A673 (cell line): ENCODE measurements at regions of chr19 and their contacts with region 1.

Region 1: GRCh38 chr19:34336781-34337271 is 28.2 kb upstream of the GPI start:
- DNase-seq: peak; percentile 57
- H3K4me3 ChIP-seq: no peak overlapping the region
- H3K27ac ChIP-seq: no peak overlapping the region
- H3K4me1 ChIP-seq: no peaks in the 10 kb centered on the region
- H3K27me3 ChIP-seq: no peaks in the 10 kb centered on the region
- CTCF ChIP-seq: peak; percentile 76

Region 2: DNA sequence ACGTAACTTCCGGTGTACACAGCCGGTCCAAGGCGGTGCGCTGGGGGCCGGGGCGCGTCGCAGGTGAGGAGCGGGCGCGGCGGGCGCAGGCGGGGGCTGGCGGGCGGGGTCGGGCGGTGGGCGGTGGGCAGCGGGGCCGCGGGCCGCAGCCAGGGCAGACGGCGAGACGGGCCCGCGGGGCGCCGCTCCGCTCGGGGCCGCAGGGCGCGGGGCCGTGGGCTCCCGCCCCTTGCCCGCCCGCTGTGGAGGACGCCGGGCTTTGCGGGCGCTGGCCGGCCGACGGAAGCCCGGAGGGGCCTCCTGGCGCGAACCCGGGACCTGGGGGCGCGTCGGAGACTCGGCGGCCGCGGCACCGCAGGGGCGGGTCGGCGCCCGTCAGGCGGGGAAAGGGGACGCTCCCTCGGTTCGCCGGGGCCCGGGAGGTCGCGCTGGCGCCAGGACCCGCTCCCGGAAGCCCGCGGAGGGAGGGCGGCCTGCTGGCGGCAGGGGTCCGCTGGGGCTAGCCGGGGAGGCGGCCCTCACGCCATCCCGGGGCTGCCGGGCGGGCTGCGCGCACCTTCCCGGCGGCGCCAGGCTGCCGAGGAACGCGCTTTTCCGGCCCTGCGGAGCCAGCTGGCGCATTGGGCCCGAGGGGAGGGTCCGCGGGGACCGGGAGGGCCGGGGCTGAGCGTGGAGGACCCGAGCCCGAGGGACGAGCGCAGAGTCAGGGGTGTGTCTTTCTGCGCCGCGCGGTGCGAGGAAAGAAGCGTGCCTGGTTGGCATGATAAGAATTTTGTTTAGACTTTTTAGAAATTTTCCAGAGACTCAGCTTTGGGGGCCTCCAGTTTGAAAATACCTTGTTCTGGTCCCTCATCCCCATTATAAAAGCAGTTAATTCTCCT is 82.0 kb before region 1 on chr19 and contains the start of gene GARRE1:
- CTCF ChIA-PET with region 1: no interaction called
- POLR2A ChIA-PET with region 1: no interaction called
- intact Hi-C with region 1: loop called (anchors 5 kb)
- DNase-seq: peak; percentile 81
- H3K4me3 ChIP-seq: peak within 1 kb of the TSS; percentile 93
- H3K27ac ChIP-seq: peak within 1 kb of the TSS; percentile 93
- H3K4me1 ChIP-seq: peaks cover 19% of the 10 kb centered on the region
- H3K27me3 ChIP-seq: no peaks in the 10 kb centered on the region
- CTCF ChIP-seq: no peak
- total RNA-seq, gene GARRE1: 21.0 and 22.9 TPM in 2 replicates